ENCODE measurements at regions of chr11 and their contacts with region 1.

Region 1: GRCh38 chr11:119205574-119206510 is at the start of gene CBL:
- DNase-seq: peak; percentile 95
- ATAC-seq: peak; percentile 98
- total RNA-seq, gene CBL: 7.1 TPM

Region 2: GRCh38 chr11:119284344-119285157 is 78.7 kb after region 1 on chr11:
- intact Hi-C with region 1: loop called (anchors 1 kb)
- DNase-seq: no peak
- ATAC-seq: no peak

Region 3: GRCh38 chr11:119315131-119316015 is 109.5 kb after region 1 on chr11:
- intact Hi-C with region 1: loop called (anchors 2 kb)
- DNase-seq: no peak
- ATAC-seq: peak; percentile 40